CD14-positive monocyte (primary cell): ENCODE measurements at regions of chr3 and their contacts with region 1.

Region 1: DNA sequence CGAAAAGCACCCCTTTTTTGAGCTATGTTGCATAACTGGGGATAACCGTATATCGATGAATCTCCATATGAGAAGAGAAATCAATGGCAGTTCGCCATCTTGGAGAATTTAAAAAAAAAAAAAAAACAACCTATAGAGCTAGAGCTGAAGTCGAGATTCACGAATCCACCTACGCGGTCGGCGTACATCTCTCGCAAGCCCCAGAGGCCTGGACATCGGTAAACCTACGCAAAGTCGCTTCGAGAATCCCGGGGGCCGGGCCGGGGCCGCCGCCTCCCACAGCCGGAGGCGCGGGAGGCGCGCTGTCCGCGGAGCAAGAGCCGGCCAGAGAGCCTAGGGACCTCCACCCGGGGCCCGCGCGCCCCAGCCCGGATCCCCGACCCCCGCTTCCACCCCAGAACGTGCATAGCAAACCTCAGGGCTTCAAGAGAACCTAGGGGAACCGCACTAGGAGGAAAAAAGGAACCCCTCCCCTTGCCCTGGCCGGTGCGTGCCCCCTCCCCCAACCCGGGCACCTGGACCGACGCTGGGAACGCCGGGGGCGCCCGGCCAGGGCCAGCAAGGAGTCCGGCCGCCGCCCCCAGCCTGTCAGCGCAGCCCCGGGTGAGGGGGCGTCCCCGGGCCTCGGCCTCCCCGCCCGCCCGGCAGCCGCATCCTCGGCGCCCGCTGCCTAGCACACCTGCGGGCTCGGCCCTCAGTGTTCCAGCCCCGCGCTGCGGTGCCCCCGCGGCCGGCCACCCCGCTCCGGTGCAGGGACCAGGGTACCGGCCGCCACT is 567 bp downstream of the PFN2 start:
- DNase-seq: peak; percentile 21 to 43 (median 32)
- H3K4me3 ChIP-seq: peak overlapping the region; percentile 34 to 73 (median 39)
- H3K4me3 Mint-ChIP-seq: peak overlapping the region; percentile 86 to 88
- H3K27ac ChIP-seq: no peak overlapping the region
- H3K27ac Mint-ChIP-seq: no peak overlapping the region
- H3K4me1 ChIP-seq: peaks cover 11 to 25% of the 10 kb centered on the region in 2 donors
- H3K4me1 Mint-ChIP-seq: peaks cover 21% of the 10 kb centered on the region
- H3K27me3 ChIP-seq: peaks cover 55 to 61% of the 10 kb centered on the region in 2 donors
- H3K27me3 Mint-ChIP-seq: peaks cover 50 to 67% (median 55%) of the 10 kb centered on the region in 3 donors
- CTCF ChIP-seq: no peak

Region 2: GRCh38 chr3:150183678-150184425 is 213.7 kb after region 1 on chr3:
- intact Hi-C with region 1: loop called in 1 of 2 experiments (anchors 10 kb)
- DNase-seq: peak; percentile 8 to 30 (median 22)
- H3K4me3 ChIP-seq: peak overlapping the region in 1 of 3 experiments; percentile 55
- H3K4me3 Mint-ChIP-seq: no peak overlapping the region
- H3K27ac ChIP-seq: no peak overlapping the region
- H3K27ac Mint-ChIP-seq: no peak overlapping the region
- H3K4me1 ChIP-seq: peaks cover 0 to 6% of the 10 kb centered on the region in 2 donors
- H3K4me1 Mint-ChIP-seq: no peaks in the 10 kb centered on the region
- H3K27me3 ChIP-seq: peaks cover 0 to 10% of the 10 kb centered on the region in 2 donors
- H3K27me3 Mint-ChIP-seq: peaks cover 0 to 9% (median 4%) of the 10 kb centered on the region in 3 donors
- CTCF ChIP-seq: peak; percentile 45

Region 3: GRCh38 chr3:150220799-150221198 is 250.7 kb after region 1 on chr3:
- intact Hi-C with region 1: loop called in 1 of 2 experiments (anchors 5 kb)
- DNase-seq: no peak
- H3K4me3 ChIP-seq: no peak overlapping the region
- H3K4me3 Mint-ChIP-seq: no peak overlapping the region
- H3K27ac ChIP-seq: no peak overlapping the region
- H3K27ac Mint-ChIP-seq: no peak overlapping the region
- H3K4me1 ChIP-seq: peaks cover 6 to 12% of the 10 kb centered on the region in 2 donors
- H3K4me1 Mint-ChIP-seq: peaks cover 10% of the 10 kb centered on the region
- H3K27me3 ChIP-seq: peaks cover 9 to 16% of the 10 kb centered on the region in 2 donors
- H3K27me3 Mint-ChIP-seq: peaks cover 8 to 22% (median 18%) of the 10 kb centered on the region in 3 donors
- CTCF ChIP-seq: no peak